ENCODE measurements at regions of chr12 and their contacts with region 1.

Region 1: DNA sequence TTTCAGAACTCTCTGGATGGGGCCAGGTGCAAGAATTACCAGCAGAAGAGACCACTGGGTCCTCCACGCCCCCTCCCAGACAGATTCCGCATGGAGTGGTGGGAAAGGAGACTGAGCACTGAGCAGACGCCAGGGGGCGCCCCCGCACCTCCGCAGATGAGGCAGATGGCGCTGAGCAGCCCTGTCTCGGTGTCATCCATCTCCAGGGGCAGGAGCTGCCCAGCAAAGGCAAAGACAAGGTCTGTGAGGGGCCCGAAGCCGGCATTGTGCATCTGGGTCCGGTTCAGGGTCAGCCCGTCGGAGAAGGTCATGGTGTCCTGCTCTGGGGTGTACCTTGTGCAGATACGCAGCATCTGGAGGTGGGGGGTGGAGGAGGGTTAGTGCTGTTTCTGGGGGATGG is 6.3 kb upstream of the ITGB7 start:
- DNase-seq: peak; percentile 93
- H3K4me3 ChIP-seq: no peak overlapping the region
- H3K27ac ChIP-seq: no peak overlapping the region; a peak in 1 of 4 replicates
- H3K4me1 ChIP-seq: peaks cover 6 to 19% of the 10 kb centered on the region in 2 experiments; a peak in 3 of 4 replicates
- H3K27me3 ChIP-seq: no peaks in the 10 kb centered on the region
- CTCF ChIP-seq: peak; percentile 93
- EP300 ChIP-seq: no peak
- RAD21 ChIP-seq: peak; percentile 96

Region 2: GRCh38 chr12:53180220-53180930 is 33.0 kb before region 1 on chr12 and contains the starts of genes CSAD and ZNF740:
- CTCF ChIA-PET with region 1: interaction called, 33 read pairs
- POLR2A ChIA-PET with region 1: interaction called, 3 read pairs
- DNase-seq: peak; percentile 98
- H3K4me3 ChIP-seq: peak within 1 kb of the TSS; percentile 77 to 78
- H3K27ac ChIP-seq: peak within 1 kb of the TSS; percentile 89 to 97
- H3K4me1 ChIP-seq: peaks cover 17 to 27% of the 10 kb centered on the region in 2 experiments; a peak in 3 of 4 replicates
- H3K27me3 ChIP-seq: no peaks in the 10 kb centered on the region
- CTCF ChIP-seq: no peak
- EP300 ChIP-seq: 0 out of 4 replicates have a peak, but pooled peaks of 1 of the 2 experiments have one; percentile 6
- RAD21 ChIP-seq: no peak
- polyA plus RNA-seq, gene CSAD: 32.2 and 45.4 TPM in 2 replicates
- polyA plus RNA-seq, gene ZNF740: 14.6 and 21.8 TPM in 2 replicates

Region 3: GRCh38 chr12:53200458-53201176 is 12.7 kb before region 1 on chr12:
- CTCF ChIA-PET with region 1: interaction called, 143 read pairs
- POLR2A ChIA-PET with region 1: interaction called, 3 read pairs
- DNase-seq: no peak
- H3K4me3 ChIP-seq: no peak overlapping the region
- H3K27ac ChIP-seq: peak overlapping the region in 1 of 2 experiments; percentile 46; a peak in 1 of 4 replicates
- H3K4me1 ChIP-seq: no peaks in the 10 kb centered on the region
- H3K27me3 ChIP-seq: no peaks in the 10 kb centered on the region
- CTCF ChIP-seq: no peak
- EP300 ChIP-seq: no peak
- RAD21 ChIP-seq: no peak

Region 4: GRCh38 chr12:53241623-53242412 is 28.5 kb after region 1 on chr12:
- CTCF ChIA-PET with region 1: interaction called, 38 read pairs
- POLR2A ChIA-PET with region 1: no interaction called
- DNase-seq: no peak
- H3K4me3 ChIP-seq: no peak overlapping the region
- H3K27ac ChIP-seq: no peak overlapping the region
- H3K4me1 ChIP-seq: peaks cover 0 to 2% of the 10 kb centered on the region in 2 experiments; a peak in 1 of 4 replicates
- H3K27me3 ChIP-seq: peaks cover 4% of the 10 kb centered on the region; the same call in 1 of the 2 replicates
- CTCF ChIP-seq: no peak
- EP300 ChIP-seq: no peak
- RAD21 ChIP-seq: no peak

Region 5: GRCh38 chr12:53267999-53268647 is 54.8 kb after region 1 on chr12 and contains the start of gene ESPL1:
- CTCF ChIA-PET with region 1: interaction called, 223 read pairs
- POLR2A ChIA-PET with region 1: no interaction called
- DNase-seq: peak; percentile 95
- H3K4me3 ChIP-seq: peak within 1 kb of the TSS; percentile 76
- H3K27ac ChIP-seq: peak within 1 kb of the TSS; percentile 5 to 20; a peak in 1 of 4 replicates
- H3K4me1 ChIP-seq: peaks cover 5 to 21% of the 10 kb centered on the region in 2 experiments; a peak in 2 of 4 replicates
- H3K27me3 ChIP-seq: no peaks in the 10 kb centered on the region
- CTCF ChIP-seq: peak; percentile 53
- EP300 ChIP-seq: no peak; a peak in 1 of 4 replicates
- RAD21 ChIP-seq: peak; percentile 69
- polyA plus RNA-seq, gene ESPL1: 6.9 and 8.6 TPM in 2 replicates

Region 6: DNA sequence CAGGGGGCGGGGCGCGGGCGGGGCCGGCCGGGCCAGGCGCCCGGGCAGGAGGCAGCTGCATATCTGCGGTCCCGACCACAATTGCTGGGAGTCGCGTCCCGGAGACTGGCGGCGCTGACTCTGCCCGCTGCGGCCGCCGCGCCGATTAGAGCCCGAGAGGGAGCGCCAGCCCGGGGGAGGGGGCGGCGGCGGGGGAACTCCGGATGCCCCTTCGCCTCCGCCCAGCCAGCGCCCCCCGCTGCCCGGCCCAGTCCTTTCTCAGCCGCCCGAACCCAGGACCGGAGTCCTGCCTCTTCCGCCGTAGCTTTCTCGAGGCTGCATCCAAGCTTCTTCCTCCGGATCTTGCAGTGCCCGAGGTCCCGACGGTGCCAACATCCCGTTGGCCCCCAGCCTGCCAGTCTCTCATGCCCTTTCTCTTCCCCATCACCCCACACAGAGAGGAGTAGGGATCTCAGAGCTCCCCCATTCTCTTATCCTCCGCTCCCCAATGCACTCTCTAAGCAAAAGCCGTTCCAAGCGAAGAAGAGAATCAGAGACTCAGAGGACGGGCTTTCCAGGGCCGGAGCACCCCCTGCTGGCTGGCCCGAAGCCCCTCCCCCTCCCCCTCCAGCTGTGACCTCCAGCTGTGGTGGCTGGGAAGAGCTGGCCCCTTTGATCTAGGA is 131.6 kb after region 1 on chr12:
- CTCF ChIA-PET with region 1: interaction called, 16 read pairs
- POLR2A ChIA-PET with region 1: no interaction called
- DNase-seq: peak; percentile 93
- H3K4me3 ChIP-seq: peak overlapping the region; percentile 53 to 72
- H3K27ac ChIP-seq: peak overlapping the region; percentile 71 to 74
- H3K4me1 ChIP-seq: peaks cover 0 to 14% of the 10 kb centered on the region in 2 experiments; a peak in 2 of 4 replicates
- H3K27me3 ChIP-seq: no peaks in the 10 kb centered on the region
- CTCF ChIP-seq: peak; percentile 83
- EP300 ChIP-seq: peak in 1 of 2 experiments; percentile 30; a peak in 1 of 4 replicates
- RAD21 ChIP-seq: peak; percentile 73

Measured in SK-N-SH (cell line).